GM13977 (cell line): ENCODE measurements at regions of chr6 and their contacts with region 1.

Region 1: GRCh38 chr6:141133346-141133745 is 999.4 kb upstream of the GJE1 start:
- DNase-seq: no peak
- CTCF ChIP-seq: no peak

Region 2: DNA sequence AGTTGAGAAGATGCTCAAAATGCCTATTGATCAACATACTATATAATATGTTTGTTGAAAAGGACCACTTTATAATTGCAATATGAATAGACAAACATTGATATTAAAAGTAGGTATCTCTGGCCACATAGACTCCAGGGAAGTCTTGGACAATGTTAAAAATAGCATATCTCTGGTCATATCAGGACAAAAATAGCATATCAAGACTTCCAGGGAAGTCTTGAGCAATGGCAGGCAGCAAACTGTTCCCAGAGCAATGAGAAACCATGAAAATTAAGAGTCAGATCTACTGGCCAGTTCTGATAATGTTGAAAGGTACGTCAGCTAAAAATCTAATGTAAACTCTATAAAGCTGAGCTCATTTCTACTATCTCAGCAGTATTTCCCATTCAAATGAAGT is 628.6 kb before region 1 on chr6:
- in situ Hi-C with region 1: no loop called
- DNase-seq: no peak
- CTCF ChIP-seq: no peak

Region 3: DNA sequence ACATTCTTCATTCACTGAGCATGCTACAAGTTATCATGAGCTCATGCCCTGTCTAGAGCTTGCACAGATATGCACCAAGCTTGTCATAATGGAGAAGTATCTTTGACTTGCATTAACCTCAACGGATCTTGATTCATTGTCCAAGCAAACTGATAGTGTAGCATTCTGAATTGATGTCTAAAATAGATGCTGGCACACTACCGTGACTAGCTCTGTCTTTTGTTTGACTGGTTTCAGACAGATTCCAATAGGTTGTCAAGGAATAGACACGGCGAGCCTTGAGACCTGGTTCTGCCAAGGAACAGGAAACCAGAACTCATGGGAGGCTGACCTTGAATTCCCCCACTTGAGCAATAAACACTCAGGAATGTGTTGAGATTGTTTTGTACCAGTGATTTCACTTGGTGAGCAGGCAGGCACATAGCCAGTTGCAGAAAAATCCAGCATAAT is 153.7 kb before region 1 on chr6:
- in situ Hi-C with region 1: no loop called
- DNase-seq: no peak
- CTCF ChIP-seq: no peak

Region 4: DNA sequence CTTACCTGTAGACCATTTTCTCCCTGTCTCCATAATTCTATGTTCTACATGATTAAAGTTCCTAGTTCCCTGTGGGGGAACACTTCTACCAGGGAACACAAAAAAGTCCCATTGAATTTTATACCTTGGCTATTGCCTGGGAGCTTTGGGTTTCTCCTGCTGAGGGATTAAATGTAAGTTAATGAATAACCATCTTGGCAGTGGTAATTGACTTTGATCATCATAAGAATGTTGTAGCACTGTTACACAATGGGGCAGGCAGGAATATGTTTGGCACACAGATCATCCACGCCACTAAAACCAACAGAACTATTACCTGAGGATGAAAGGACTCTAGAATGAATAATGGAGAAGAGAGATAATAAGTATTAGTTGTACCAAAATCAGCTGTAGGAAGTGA is 106.8 kb before region 1 on chr6:
- in situ Hi-C with region 1: loop called (anchors 25 kb)
- DNase-seq: no peak
- CTCF ChIP-seq: no peak

Region 5: GRCh38 chr6:141521440-141521839 is 388.1 kb after region 1 on chr6:
- in situ Hi-C with region 1: no loop called
- DNase-seq: no peak
- CTCF ChIP-seq: no peak